Adrenal gland (tissue), 19 donors: ENCODE measurements at regions of chrX and their contacts with region 1.

Region 1: DNA sequence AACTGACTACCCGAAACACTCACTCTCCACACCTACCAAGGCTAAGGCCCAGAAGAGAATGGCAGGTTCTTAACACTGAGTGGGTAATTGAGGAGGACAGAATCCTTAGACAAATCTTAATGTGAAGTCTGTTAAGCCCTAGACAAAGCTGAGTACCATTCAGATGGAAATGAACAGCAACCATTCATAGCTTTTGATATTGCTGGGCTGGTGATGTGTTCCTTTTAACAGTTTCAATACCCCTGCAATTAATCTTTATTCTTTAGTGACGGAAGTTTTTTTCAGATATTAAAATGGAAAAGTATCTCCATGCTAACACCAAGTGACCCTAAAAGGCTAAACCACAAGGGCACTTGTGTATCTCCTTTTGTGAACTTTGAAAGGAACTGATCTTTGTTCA is 334.9 kb downstream of the OPHN1 start:
- DNase-seq: no peak
- H3K4me3 ChIP-seq: no peak overlapping the region
- H3K27ac ChIP-seq: no peak overlapping the region
- H3K4me1 ChIP-seq: no peaks in the 10 kb centered on the region
- H3K27me3 ChIP-seq: peaks cover 7% of the 10 kb centered on the region
- CTCF ChIP-seq: no peak
- POLR2A ChIP-seq: no peak

Region 2: GRCh38 chrX:67555578-67556203 is 542.7 kb before region 1 on chrX:
- intact Hi-C with region 1: loop called in 1 of 2 experiments (anchors 5 kb)
- DNase-seq: peak in 6 of 7 donors; percentile 14 to 61 (median 44)
- H3K4me3 ChIP-seq: no peak overlapping the region
- H3K27ac ChIP-seq: no peak overlapping the region
- H3K4me1 ChIP-seq: no peaks in the 10 kb centered on the region
- H3K27me3 ChIP-seq: peaks cover 15% of the 10 kb centered on the region
- CTCF ChIP-seq: peak; percentile 41 to 71 (median 57)
- POLR2A ChIP-seq: no peak

Region 3: DNA sequence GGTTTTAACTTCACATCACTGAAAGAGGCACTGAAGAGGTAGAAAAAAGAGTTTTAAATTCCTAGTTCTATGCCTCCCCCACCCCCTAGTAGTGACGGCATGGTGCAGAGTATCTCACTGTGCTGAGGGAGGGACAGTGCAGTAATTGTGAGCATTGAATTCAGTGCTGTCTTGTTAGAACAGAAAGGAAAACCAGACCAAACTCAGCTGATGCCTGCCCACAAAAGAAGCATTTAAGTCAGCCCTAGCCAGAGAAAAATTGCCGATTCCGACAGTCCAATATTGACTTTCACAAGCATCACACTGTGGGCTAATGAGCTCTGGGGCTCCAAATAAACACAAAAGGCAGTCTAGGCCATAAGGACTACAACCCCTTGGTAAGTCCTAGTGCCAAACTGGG is 136.9 kb before region 1 on chrX:
- intact Hi-C with region 1: no loop called
- DNase-seq: no peak
- H3K4me3 ChIP-seq: no peak overlapping the region
- H3K27ac ChIP-seq: no peak overlapping the region
- H3K4me1 ChIP-seq: no peaks in the 10 kb centered on the region
- H3K27me3 ChIP-seq: peaks cover 15% of the 10 kb centered on the region
- CTCF ChIP-seq: no peak
- POLR2A ChIP-seq: no peak

Region 4: DNA sequence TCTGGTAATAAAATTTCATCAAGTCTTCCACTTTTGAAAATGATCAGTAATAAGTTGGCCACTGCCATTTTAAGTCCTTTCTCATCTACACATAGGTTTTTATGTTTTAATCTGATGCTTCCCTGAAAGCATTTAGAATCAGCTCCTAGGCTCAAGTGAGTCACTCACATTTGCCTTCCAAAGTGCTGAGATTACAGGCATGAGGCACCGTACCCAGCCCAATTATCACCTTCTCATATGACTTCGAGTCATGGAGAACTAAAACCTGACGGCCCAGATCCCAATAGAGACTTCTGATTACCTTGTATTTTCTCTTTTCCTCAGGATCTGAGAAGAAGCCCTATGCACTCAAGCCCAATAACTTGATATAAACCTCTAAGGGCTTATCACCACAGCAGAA is 194.0 kb after region 1 on chrX:
- intact Hi-C with region 1: no loop called
- DNase-seq: no peak
- H3K4me3 ChIP-seq: no peak overlapping the region
- H3K27ac ChIP-seq: no peak overlapping the region
- H3K4me1 ChIP-seq: no peaks in the 10 kb centered on the region
- H3K27me3 ChIP-seq: no peaks in the 10 kb centered on the region
- CTCF ChIP-seq: no peak
- POLR2A ChIP-seq: no peak